K562 (cell line): ENCODE measurements at regions of chr1 and their contacts with region 1.

Region 1: DNA sequence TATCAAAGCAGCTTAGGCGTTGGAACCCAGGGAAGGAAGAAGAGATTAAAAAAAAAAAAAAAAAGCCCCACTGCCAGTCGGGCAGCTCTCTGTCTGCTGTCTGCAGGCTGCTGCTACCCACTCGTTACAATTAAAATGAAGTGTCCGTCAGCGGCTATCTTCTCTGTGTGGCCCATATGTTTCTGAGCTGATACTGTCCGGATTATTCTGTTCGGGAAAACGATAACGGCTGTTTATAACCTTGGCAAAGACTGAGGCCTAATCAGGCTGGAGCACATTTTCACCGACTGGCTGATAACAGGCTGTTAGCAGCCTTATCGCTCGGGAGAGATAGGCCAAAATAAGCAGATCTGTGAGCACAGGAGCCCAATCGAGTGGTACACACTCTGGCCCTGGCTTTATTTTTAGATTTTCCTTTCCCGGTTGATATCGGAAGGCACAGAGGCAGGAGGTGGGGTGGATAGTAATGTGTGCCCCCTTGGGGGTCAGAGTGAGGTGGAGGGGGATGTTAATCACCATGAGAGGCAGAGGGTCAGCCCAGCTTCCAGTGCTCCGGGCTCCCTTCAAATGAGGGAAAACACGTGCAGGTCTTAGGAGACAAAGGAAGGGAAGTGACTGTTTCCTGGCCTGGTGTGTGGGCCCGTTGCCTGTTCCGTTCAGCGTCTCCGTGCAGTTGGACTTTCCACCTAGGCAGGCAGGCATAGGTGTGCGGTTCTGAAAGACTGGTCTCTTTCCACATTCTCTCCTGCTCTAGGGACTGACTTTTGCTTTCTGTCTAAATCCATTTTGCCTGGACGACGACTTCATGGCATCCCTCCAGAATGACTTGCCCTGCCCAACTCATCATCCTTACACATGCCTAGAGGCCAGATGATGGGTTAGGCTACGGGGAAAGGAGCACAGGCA is 153.4 kb downstream of the PBX1 start:
- DNase-seq: peak; percentile 89 to 91 (median 90)
- ATAC-seq: peak; percentile 87
- H3K4me3 ChIP-seq: no peak overlapping the region
- H3K27ac ChIP-seq: peak overlapping the region; percentile 64
- H3K4me1 ChIP-seq: peaks cover 16 to 34% of the 10 kb centered on the region in 2 experiments; a peak in 3 of 5 replicates
- H3K27me3 ChIP-seq: no peaks in the 10 kb centered on the region
- CTCF ChIP-seq: no peak
- EP300 ChIP-seq: peak; percentile 99
- POLR2A ChIP-seq: no peak
- RAD21 ChIP-seq: peak; percentile 3 to 41; a peak in 3 of 4 replicates

Region 2: GRCh38 chr1:164673584-164674214 is 38.7 kb before region 1 on chr1:
- CTCF ChIA-PET with region 1: no interaction called
- POLR2A ChIA-PET with region 1: no interaction called
- in situ Hi-C with region 1: no loop called
- intact Hi-C with region 1: loop called (anchors 2 kb)
- DNase-seq: peak; percentile 68 to 81 (median 76)
- ATAC-seq: peak; percentile 89
- H3K4me3 ChIP-seq: no peak overlapping the region
- H3K27ac ChIP-seq: no peak overlapping the region
- H3K4me1 ChIP-seq: no peaks in the 10 kb centered on the region; a peak in 2 of 5 replicates
- H3K27me3 ChIP-seq: peaks cover 0 to 2% of the 10 kb centered on the region in 2 experiments; a peak in 2 of 5 replicates
- CTCF ChIP-seq: peak; percentile 63 to 93 (median 73)
- EP300 ChIP-seq: no peak
- POLR2A ChIP-seq: no peak
- RAD21 ChIP-seq: peak; percentile 55 to 63

Region 3: DNA sequence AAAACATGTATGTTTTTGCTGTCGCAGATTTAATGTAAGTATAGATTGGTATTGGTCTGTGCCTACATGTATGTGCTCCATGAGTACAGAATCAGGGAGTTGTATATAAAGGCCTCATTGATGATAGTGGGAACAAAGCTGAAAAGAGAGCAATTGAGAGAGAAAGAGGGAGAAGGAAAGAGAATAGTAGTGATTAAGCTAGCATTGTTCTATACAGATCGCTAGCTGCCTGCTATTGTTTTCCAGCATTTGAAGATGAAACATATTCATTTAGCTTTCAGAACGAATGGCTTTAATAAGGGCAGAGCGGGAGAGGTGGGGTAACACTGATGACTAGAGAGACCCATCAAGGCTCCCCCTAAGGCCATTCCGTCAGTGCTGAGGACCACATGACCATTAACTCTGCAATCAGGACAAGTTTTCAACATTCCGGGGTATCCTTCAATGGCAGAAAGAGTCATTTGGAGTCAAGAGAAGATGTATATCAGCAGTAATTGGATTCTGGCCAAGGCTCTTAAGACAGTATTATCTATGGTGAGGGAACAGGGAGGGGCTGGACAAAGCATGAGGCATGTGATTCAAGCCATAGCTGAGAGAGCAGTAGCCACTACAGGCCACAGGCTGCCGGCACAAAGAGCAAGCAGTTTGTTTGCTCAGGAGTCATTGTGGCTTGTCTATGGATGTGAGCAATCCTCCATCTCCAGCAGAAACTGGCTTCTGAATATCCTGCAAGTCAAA is 23.1 kb after region 1 on chr1:
- CTCF ChIA-PET with region 1: no interaction called
- POLR2A ChIA-PET with region 1: interaction called, 4 read pairs
- in situ Hi-C with region 1: no loop called
- intact Hi-C with region 1: loop called (anchors 2 kb)
- DNase-seq: peak in 3 of 4 experiments; percentile 17 to 50 (median 33)
- ATAC-seq: peak; percentile 89
- H3K4me3 ChIP-seq: no peak overlapping the region
- H3K27ac ChIP-seq: no peak overlapping the region
- H3K4me1 ChIP-seq: peaks cover 5 to 11% of the 10 kb centered on the region in 2 experiments; a peak in 4 of 5 replicates
- H3K27me3 ChIP-seq: no peaks in the 10 kb centered on the region
- CTCF ChIP-seq: no peak
- EP300 ChIP-seq: no peak
- POLR2A ChIP-seq: no peak
- RAD21 ChIP-seq: no peak

Region 4: GRCh38 chr1:164774819-164775654 is 62.7 kb after region 1 on chr1:
- CTCF ChIA-PET with region 1: no interaction called
- POLR2A ChIA-PET with region 1: no interaction called
- in situ Hi-C with region 1: no loop called
- intact Hi-C with region 1: loop called (anchors 1 kb)
- DNase-seq: peak; percentile 42 to 56 (median 53)
- ATAC-seq: peak; percentile 75
- H3K4me3 ChIP-seq: no peak overlapping the region
- H3K27ac ChIP-seq: no peak overlapping the region
- H3K4me1 ChIP-seq: peaks cover 4 to 53% of the 10 kb centered on the region in 2 experiments; a peak in 4 of 5 replicates
- H3K27me3 ChIP-seq: peaks cover 0 to 12% of the 10 kb centered on the region in 2 experiments; a peak in 1 of 5 replicates
- CTCF ChIP-seq: no peak
- EP300 ChIP-seq: peak; percentile 64
- POLR2A ChIP-seq: no peak
- RAD21 ChIP-seq: no peak